ENCODE measurements at regions of chr2 and their contacts with region 1.

Region 1: GRCh38 chr2:227671170-227672060 is 4.8 kb downstream of the SCYGR5 start:
- DNase-seq: no peak
- ATAC-seq: no peak
- H3K4me3 ChIP-seq: no peak overlapping the region
- H3K27ac ChIP-seq: no peak overlapping the region
- H3K4me1 ChIP-seq: no peaks in the 10 kb centered on the region
- CTCF ChIP-seq: no peak
- EP300 ChIP-seq: no peak
- POLR2A ChIP-seq: no peak
- RAD21 ChIP-seq: no peak

Region 2: DNA sequence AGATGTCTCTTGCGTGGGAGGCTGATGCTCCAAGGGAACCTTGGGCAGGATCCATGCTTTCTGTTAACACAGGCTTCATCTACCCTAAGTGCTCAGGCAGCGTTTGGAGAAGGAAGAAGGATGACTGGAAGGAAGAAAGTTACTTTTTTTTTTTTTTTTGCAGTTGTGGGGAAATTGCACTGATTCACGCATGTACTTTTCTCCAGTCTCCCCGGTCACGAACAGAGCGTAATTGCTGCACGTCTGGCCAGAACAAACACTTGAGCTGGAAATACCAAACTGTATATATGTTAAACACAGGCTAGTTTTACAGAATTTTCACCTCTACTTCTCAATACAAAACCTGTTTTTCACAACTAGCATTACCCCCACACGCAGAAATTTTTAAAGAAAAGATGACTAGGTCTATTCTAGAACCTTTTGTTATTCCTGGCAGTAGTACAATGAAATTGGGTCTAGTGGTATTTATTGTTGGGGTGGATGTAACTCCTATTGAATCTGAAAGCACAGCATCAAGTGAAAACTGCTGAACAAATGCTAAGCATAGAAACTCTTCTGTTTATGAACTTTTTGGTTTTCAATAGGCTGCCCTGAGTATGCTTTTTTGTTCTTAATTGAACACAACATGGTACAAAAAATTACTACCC is 14.1 kb before region 1 on chr2:
- CTCF ChIA-PET with region 1: interaction called, 12 read pairs
- POLR2A ChIA-PET with region 1: no interaction called
- DNase-seq: peak in 1 of 2 experiments; percentile 37
- ATAC-seq: peak in 1 of 2 experiments; percentile 13; a peak in 3 of 6 replicates
- H3K4me3 ChIP-seq: no peak overlapping the region
- H3K27ac ChIP-seq: peak overlapping the region; percentile 81 to 89
- H3K4me1 ChIP-seq: peaks cover 54% of the 10 kb centered on the region
- CTCF ChIP-seq: no peak
- EP300 ChIP-seq: no peak
- POLR2A ChIP-seq: no peak
- RAD21 ChIP-seq: no peak

Region 3: GRCh38 chr2:227960317-227960716 is 288.9 kb after region 1 on chr2:
- CTCF ChIA-PET with region 1: no interaction called
- POLR2A ChIA-PET with region 1: no interaction called
- DNase-seq: no peak
- ATAC-seq: no peak
- H3K4me3 ChIP-seq: no peak overlapping the region
- H3K27ac ChIP-seq: no peak overlapping the region
- H3K4me1 ChIP-seq: no peaks in the 10 kb centered on the region
- CTCF ChIP-seq: no peak
- EP300 ChIP-seq: no peak
- POLR2A ChIP-seq: no peak
- RAD21 ChIP-seq: no peak

Measured in A549 (cell line).